Activated CD4-positive, alpha-beta memory T cell treated with anti-CD3 and anti-CD28 coated beads for 36 hours (primary cell): ENCODE measurements at regions of chr7 and their contacts with region 1.

Region 1: GRCh38 chr7:139915864-139916716 is 87.0 kb downstream of the TBXAS1 start:
- DNase-seq: peak; percentile 85
- H3K4me3 Mint-ChIP-seq: peak overlapping the region; percentile 24
- H3K27ac Mint-ChIP-seq: peak overlapping the region; percentile 80
- H3K4me1 Mint-ChIP-seq: peaks cover 28% of the 10 kb centered on the region
- H3K27me3 Mint-ChIP-seq: peaks cover 2% of the 10 kb centered on the region

Region 2: GRCh38 chr7:139673230-139673629 is 242.9 kb before region 1 on chr7:
- CTCF ChIA-PET with region 1: no interaction called
- POLR2A ChIA-PET with region 1: no interaction called
- intact Hi-C with region 1: loop called (anchors 1 kb)
- DNase-seq: peak; percentile 73
- H3K4me3 Mint-ChIP-seq: peak overlapping the region; percentile 3
- H3K27ac Mint-ChIP-seq: peak overlapping the region; percentile 74
- H3K4me1 Mint-ChIP-seq: peaks cover 40% of the 10 kb centered on the region
- H3K27me3 Mint-ChIP-seq: no peaks in the 10 kb centered on the region

Region 3: GRCh38 chr7:139680676-139681462 is 235.2 kb before region 1 on chr7:
- CTCF ChIA-PET with region 1: no interaction called
- POLR2A ChIA-PET with region 1: no interaction called
- intact Hi-C with region 1: loop called (anchors 2 kb)
- DNase-seq: peak; percentile 92
- H3K4me3 Mint-ChIP-seq: no peak overlapping the region
- H3K27ac Mint-ChIP-seq: peak overlapping the region; percentile 94
- H3K4me1 Mint-ChIP-seq: peaks cover 48% of the 10 kb centered on the region
- H3K27me3 Mint-ChIP-seq: no peaks in the 10 kb centered on the region

Region 4: GRCh38 chr7:139829025-139829774 is 86.9 kb before region 1 on chr7 and contains the start of gene TBXAS1:
- CTCF ChIA-PET with region 1: no interaction called
- POLR2A ChIA-PET with region 1: interaction called, 6 read pairs
- intact Hi-C with region 1: loop called (anchors 1 kb)
- DNase-seq: peak; percentile 36
- H3K4me3 Mint-ChIP-seq: peak within 1 kb of the TSS; percentile 73
- H3K27ac Mint-ChIP-seq: peak within 1 kb of the TSS; percentile 88
- H3K4me1 Mint-ChIP-seq: peaks cover 28% of the 10 kb centered on the region
- H3K27me3 Mint-ChIP-seq: peaks cover 4% of the 10 kb centered on the region
- total RNA-seq, gene TBXAS1: 4.8 to 5.3 TPM

Region 5: GRCh38 chr7:139875821-139876241 is 40.3 kb before region 1 on chr7:
- CTCF ChIA-PET with region 1: interaction called, 4 read pairs
- POLR2A ChIA-PET with region 1: no interaction called
- intact Hi-C with region 1: loop called (anchors 1 kb)
- DNase-seq: no peak
- H3K4me3 Mint-ChIP-seq: no peak overlapping the region
- H3K27ac Mint-ChIP-seq: no peak overlapping the region
- H3K4me1 Mint-ChIP-seq: peaks cover 10% of the 10 kb centered on the region
- H3K27me3 Mint-ChIP-seq: no peaks in the 10 kb centered on the region

Region 6: DNA sequence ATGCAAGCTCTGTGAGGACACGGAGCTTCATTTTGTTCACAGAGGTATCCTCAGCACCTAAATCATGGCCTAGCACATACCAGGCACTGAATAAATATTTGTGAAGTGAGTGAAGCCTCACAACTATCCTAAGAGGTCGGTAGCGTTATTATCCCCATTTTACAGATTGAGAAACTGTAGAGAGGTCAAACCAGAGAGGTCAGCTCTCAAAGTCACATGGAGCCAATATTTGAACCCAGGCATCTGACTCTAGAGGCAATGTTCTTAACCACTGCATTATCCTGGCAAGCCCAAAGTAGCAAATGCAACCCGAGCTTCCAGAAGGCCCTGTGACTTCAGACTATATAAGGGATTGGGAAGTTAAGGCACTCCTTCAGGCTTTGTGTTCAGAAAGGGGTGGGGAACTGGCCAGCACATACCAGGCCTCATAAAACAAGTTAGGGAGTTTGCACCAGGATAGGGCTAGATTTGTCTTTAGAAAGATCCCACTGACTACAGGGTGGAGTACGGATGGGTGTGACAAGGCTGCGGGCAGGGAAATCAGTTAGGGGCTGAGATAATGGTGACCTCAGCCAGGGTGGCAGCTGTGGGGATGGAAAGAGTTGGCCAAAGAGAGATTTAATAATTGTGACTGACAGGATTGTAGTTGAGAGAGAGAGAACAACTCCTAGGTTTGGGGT is 14.3 kb after region 1 on chr7:
- CTCF ChIA-PET with region 1: no interaction called
- POLR2A ChIA-PET with region 1: no interaction called
- intact Hi-C with region 1: loop called (anchors 1 kb)
- DNase-seq: no peak
- H3K4me3 Mint-ChIP-seq: no peak overlapping the region
- H3K27ac Mint-ChIP-seq: no peak overlapping the region
- H3K4me1 Mint-ChIP-seq: peaks cover 19% of the 10 kb centered on the region
- H3K27me3 Mint-ChIP-seq: no peaks in the 10 kb centered on the region

Region 7: GRCh38 chr7:140209866-140210609 is 293.9 kb after region 1 on chr7:
- CTCF ChIA-PET with region 1: no interaction called
- POLR2A ChIA-PET with region 1: no interaction called
- intact Hi-C with region 1: loop called (anchors 5 kb)
- DNase-seq: peak; percentile 87
- H3K4me3 Mint-ChIP-seq: peak overlapping the region; percentile 38
- H3K27ac Mint-ChIP-seq: peak overlapping the region; percentile 86
- H3K4me1 Mint-ChIP-seq: peaks cover 86% of the 10 kb centered on the region
- H3K27me3 Mint-ChIP-seq: no peaks in the 10 kb centered on the region

Region 8: GRCh38 chr7:140506788-140507464 is 590.8 kb after region 1 on chr7:
- CTCF ChIA-PET with region 1: no interaction called
- POLR2A ChIA-PET with region 1: no interaction called
- intact Hi-C with region 1: no loop called
- DNase-seq: no peak
- H3K4me3 Mint-ChIP-seq: no peak overlapping the region
- H3K27ac Mint-ChIP-seq: no peak overlapping the region
- H3K4me1 Mint-ChIP-seq: no peaks in the 10 kb centered on the region
- H3K27me3 Mint-ChIP-seq: no peaks in the 10 kb centered on the region